ENCODE measurements at regions of chr5 and their contacts with region 1.

Region 1: GRCh38 chr5:159001247-159001646 is 98.5 kb downstream of the EBF1 start:
- DNase-seq: no peak
- ATAC-seq: no peak
- H3K4me3 ChIP-seq: no peak overlapping the region
- H3K4me3 Mint-ChIP-seq: no peak overlapping the region
- H3K27ac ChIP-seq: no peak overlapping the region
- H3K27ac Mint-ChIP-seq: no peak overlapping the region
- H3K4me1 ChIP-seq: peaks cover 5% of the 10 kb centered on the region
- H3K4me1 Mint-ChIP-seq: peaks cover 18% of the 10 kb centered on the region
- H3K27me3 ChIP-seq: peaks cover 5 to 7% of the 10 kb centered on the region in 2 experiments
- H3K27me3 Mint-ChIP-seq: peaks cover 3% of the 10 kb centered on the region
- CTCF ChIP-seq: no peak

Region 2: GRCh38 chr5:158565017-158565789 is 436.0 kb before region 1 on chr5:
- CTCF ChIA-PET with region 1: no interaction called
- POLR2A ChIA-PET with region 1: no interaction called
- intact Hi-C with region 1: no loop called
- DNase-seq: no peak
- ATAC-seq: no peak
- H3K4me3 ChIP-seq: no peak overlapping the region
- H3K4me3 Mint-ChIP-seq: no peak overlapping the region
- H3K27ac ChIP-seq: no peak overlapping the region
- H3K27ac Mint-ChIP-seq: no peak overlapping the region
- H3K4me1 ChIP-seq: no peaks in the 10 kb centered on the region
- H3K4me1 Mint-ChIP-seq: no peaks in the 10 kb centered on the region
- H3K27me3 ChIP-seq: no peaks in the 10 kb centered on the region
- H3K27me3 Mint-ChIP-seq: no peaks in the 10 kb centered on the region
- CTCF ChIP-seq: no peak

Region 3: DNA sequence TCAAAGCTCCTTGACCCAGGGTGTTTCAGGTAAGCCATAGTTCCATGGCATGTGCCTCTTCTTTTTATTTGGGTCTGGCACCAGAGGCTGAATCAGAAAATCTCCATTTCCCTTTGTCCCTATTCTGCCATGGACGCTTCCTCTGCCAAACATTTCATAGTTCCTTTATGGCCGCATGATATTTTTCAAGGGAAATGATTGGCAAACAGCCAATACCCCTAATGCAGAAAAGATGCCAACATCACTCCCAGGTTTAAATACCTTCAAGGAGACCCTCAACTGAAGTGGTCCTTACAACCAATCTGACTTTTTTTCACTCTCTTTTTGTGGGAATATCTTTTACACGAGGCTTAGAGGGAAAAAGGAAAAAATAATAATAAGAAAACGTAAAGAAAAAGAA is 43.6 kb before region 1 on chr5:
- CTCF ChIA-PET with region 1: no interaction called
- POLR2A ChIA-PET with region 1: interaction called, 3 read pairs
- intact Hi-C with region 1: loop called in 1 of 2 experiments (anchors 1 kb)
- DNase-seq: no peak
- ATAC-seq: no peak
- H3K4me3 ChIP-seq: no peak overlapping the region
- H3K4me3 Mint-ChIP-seq: no peak overlapping the region
- H3K27ac ChIP-seq: no peak overlapping the region
- H3K27ac Mint-ChIP-seq: peak overlapping the region; percentile 71
- H3K4me1 ChIP-seq: peaks cover 8% of the 10 kb centered on the region
- H3K4me1 Mint-ChIP-seq: peaks cover 19% of the 10 kb centered on the region
- H3K27me3 ChIP-seq: no peaks in the 10 kb centered on the region
- H3K27me3 Mint-ChIP-seq: no peaks in the 10 kb centered on the region
- CTCF ChIP-seq: no peak

Measured in CD4-positive, alpha-beta T cell (primary cell).